Activated CD4-positive, alpha-beta T cell treated with anti-CD3 and anti-CD28 coated beads, Interleukin-2, amount 10 ng/mL, durations not matched to agents 7 days and 5 days (primary cell): ENCODE measurements at regions of chr16 and their contacts with region 1.

Region 1: GRCh38 chr16:20791923-20792612 is 14.2 kb downstream of the ERI2 start:
- DNase-seq: no peak
- H3K4me3 Mint-ChIP-seq: no peak overlapping the region
- H3K27ac Mint-ChIP-seq: no peak overlapping the region
- H3K4me1 Mint-ChIP-seq: no peaks in the 10 kb centered on the region
- H3K27me3 Mint-ChIP-seq: no peaks in the 10 kb centered on the region

Region 2: DNA sequence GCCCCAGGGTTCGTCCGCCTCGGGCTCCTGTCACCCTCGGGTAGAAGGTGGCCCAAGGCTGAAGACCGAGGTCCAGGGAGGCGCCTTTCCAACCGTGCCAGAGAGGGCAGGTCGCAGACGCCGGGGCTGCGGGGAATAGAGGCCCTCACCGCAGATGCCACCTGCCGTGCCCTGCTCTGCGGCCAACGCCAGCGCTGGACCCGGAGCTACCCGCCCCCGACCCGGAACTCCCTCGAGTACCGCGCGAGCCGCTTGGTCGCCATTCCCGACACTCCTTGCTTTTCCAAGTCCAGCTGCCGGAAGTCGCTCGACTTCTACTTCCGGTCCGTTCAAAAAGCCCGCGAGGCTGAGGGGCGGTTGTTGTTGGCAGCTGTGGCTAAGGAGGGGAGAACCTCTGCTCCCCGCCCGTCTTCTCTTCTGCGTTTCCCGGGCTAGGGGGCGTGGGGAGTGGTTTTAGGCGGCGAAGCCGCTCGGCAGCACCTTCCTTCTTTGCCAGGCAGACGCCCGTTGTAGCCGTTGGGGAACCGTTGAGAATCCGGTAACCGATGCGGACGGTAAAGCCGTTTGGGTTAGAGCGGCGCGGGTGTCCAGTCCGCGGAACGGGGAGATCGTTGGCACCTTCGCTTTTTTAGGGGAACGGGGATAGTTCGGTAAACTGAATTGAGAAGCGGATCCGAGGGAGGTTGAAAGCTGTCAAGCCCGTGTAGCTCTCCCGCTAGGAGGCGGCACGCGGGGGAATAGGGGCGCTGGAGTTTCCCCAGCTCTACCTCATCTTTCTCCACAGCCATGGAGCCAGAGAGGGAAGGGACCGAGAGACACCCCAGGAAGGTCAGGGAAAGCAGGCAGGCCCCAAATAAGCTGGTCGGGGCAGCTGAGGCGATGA is 14.3 kb after region 1 on chr16 and contains the starts of genes ERI2 and REXO5:
- CTCF ChIA-PET with region 1: interaction called, 11 read pairs
- POLR2A ChIA-PET with region 1: no interaction called
- DNase-seq: peak; percentile 81
- H3K4me3 Mint-ChIP-seq: peak within 1 kb of the TSS; percentile 96
- H3K27ac Mint-ChIP-seq: peak within 1 kb of the TSS; percentile 94
- H3K4me1 Mint-ChIP-seq: peaks cover 40% of the 10 kb centered on the region
- H3K27me3 Mint-ChIP-seq: no peaks in the 10 kb centered on the region
- total RNA-seq, gene ERI2: 12.5 to 17.3 TPM
- total RNA-seq, gene REXO5: 9.8 to 11.0 TPM